Activated naive CD4-positive, alpha-beta T cell treated with anti-CD3 and anti-CD28 coated beads for 36 hours (primary cell): ENCODE measurements at regions of chr7 and their contacts with region 1.

Region 1: DNA sequence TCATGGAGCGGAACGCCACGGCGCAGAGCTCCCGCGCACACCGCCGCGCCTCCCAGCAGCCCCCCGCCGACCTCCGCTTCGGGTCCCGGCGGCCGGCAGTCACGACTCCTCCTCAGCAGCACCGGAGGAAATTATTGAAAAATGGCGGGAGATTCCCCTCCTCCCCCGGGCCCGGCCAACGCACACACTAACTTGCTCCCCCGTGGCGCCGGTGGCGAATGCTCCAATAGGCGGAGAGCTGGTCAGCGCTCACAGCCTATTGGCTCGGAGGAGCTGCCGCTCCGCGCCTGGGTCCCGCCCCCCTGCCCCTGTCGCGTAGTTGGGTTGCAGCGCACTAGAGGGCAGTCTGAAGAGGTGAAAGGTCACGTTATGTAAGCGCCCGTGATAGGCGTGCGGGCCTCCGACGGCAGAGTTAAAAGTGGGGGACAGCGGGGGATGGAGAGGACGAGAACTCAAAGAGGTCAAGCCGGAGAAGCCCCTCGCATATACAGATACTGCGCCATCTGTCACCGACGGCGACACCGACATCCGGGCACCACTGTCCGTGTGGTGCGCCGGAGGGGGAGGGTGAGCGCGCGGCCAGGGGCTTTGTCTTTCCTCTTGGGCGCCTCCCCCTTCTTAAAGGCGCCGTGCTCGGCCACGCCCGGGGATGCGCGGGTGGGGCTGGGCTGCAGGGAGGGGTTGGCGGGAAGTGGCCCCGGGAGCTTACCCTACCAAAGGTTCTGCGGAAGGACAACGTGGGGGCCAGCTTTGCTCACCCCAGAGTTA is at the start of gene BAZ1B:
- DNase-seq: peak; percentile 99
- H3K4me3 Mint-ChIP-seq: peak within 1 kb of the TSS; percentile 98
- H3K27ac Mint-ChIP-seq: peak within 1 kb of the TSS; percentile 96
- H3K4me1 Mint-ChIP-seq: peaks cover 55% of the 10 kb centered on the region
- H3K27me3 Mint-ChIP-seq: no peaks in the 10 kb centered on the region
- total RNA-seq, gene BAZ1B: 67.6 to 69.9 TPM

Region 2: GRCh38 chr7:73308665-73309214 is 213.5 kb before region 1 on chr7 and contains the start of gene NSUN5:
- CTCF ChIA-PET with region 1: no interaction called
- intact Hi-C with region 1: loop called (anchors 1 kb)
- DNase-seq: peak; percentile 95
- H3K4me3 Mint-ChIP-seq: peak within 1 kb of the TSS; percentile 99
- H3K27ac Mint-ChIP-seq: peak within 1 kb of the TSS; percentile 93
- H3K4me1 Mint-ChIP-seq: peaks cover 28% of the 10 kb centered on the region
- H3K27me3 Mint-ChIP-seq: no peaks in the 10 kb centered on the region
- total RNA-seq, gene NSUN5: 53.3 to 57.0 TPM

Region 3: DNA sequence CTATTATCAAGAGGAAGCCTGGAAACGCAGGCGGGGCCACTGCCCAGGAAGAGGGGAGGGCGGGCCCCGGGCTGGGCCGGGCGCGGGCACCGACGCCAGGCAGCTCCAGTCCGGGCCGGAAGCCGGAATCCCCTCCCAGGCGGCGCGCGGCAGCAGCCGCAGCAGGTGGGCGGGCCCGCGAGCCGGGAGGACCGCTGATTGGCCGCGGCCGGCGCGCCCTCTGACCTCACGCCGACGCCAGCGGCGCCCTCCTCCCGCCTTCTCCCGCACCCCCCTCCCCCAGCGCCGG is 34.8 kb after region 1 on chr7:
- CTCF ChIA-PET with region 1: interaction called, 3 read pairs
- intact Hi-C with region 1: loop called (anchors 1 kb)
- DNase-seq: peak; percentile 92
- H3K4me3 Mint-ChIP-seq: peak overlapping the region; percentile 86
- H3K27ac Mint-ChIP-seq: peak overlapping the region; percentile 89
- H3K4me1 Mint-ChIP-seq: peaks cover 41% of the 10 kb centered on the region
- H3K27me3 Mint-ChIP-seq: no peaks in the 10 kb centered on the region

Region 4: DNA sequence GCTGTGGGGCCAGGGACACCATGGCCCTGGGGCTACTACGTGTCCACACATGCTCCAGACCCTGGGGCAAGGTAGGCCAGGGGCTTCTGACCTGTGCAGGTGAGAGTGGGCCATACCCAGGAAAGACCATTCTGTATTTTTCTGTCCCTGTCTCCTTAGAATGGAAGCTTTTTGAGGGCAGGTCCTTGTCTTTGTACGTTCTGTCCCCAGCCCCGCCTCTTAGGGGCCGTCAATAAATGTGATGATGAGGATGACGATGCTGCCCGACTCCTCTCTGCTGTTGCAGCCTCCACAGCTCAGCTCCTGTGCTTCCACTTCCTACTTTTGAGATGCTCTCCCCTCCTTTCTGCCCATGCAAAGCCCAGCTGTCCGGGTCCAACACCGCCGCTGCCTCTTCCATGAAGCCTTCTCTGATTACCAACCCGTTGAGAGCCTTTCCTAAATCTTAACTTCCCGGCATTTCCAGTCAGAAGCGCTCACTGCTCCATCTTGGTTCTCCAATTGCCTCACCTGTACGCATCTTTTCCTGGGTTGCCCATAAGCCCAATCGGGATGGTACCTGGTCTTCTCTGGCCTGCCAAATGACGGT is 149.7 kb after region 1 on chr7:
- CTCF ChIA-PET with region 1: no interaction called
- intact Hi-C with region 1: no loop called
- DNase-seq: no peak
- H3K4me3 Mint-ChIP-seq: no peak overlapping the region
- H3K27ac Mint-ChIP-seq: no peak overlapping the region
- H3K4me1 Mint-ChIP-seq: peaks cover 6% of the 10 kb centered on the region
- H3K27me3 Mint-ChIP-seq: peaks cover 16% of the 10 kb centered on the region

Region 5: DNA sequence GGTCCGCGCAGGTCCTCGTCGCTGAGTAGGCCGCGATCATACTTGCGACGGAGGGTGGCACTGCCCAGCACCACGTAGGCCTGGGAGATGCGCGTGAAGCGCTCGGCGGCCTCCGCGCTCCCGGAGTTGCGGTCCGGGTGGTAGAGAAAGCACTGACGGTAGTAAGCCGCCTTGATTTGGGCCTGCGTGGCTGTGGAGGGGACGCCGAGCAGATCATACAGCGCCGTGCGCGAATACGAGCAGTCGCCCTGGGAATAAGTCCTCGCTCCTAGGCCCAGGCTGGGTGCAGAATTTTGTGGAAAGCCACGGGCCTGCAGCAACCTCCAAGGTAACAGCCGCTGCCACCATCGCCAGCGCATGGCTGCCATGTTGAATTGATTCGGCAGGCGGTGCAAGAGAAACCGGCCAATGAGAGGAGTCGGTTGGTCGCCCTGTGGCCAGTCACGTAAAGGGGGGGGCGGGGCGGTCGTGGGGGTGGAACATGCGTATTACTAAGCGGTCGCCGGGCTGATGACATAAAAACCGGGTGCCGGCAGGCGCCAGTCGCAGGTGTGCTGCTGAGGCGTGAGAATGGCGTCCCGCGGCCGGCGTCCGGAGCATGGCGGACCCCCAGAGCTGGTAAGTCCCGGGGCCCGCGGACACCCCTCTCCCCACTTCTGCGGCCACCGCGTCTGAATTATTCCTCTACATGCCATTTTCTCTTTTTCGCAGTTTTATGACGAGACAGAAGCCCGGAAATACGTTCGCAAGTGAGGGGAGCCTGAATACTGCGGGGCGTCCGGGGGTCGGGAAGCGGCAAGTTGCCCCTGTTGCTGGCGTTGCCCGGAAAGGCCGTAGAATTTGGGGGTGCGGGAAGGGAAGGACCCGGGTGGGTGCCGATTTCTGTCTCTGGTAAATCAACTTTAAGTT is 161.0 kb after region 1 on chr7 and contains the starts of genes BUD23 and DNAJC30:
- CTCF ChIA-PET with region 1: no interaction called
- intact Hi-C with region 1: loop called (anchors 1 kb)
- DNase-seq: peak; percentile 99
- H3K4me3 Mint-ChIP-seq: peak within 1 kb of the TSS; percentile 98
- H3K27ac Mint-ChIP-seq: peak within 1 kb of the TSS; percentile 91
- H3K4me1 Mint-ChIP-seq: peaks cover 47% of the 10 kb centered on the region
- H3K27me3 Mint-ChIP-seq: no peaks in the 10 kb centered on the region
- total RNA-seq, gene BUD23: 95.1 to 110 TPM
- total RNA-seq, gene DNAJC30: 4.2 to 4.4 TPM

Region 6: GRCh38 chr7:73851410-73852234 is 329.3 kb after region 1 on chr7:
- CTCF ChIA-PET with region 1: no interaction called
- intact Hi-C with region 1: loop called (anchors 1 kb)
- DNase-seq: peak; percentile 60
- H3K4me3 Mint-ChIP-seq: no peak overlapping the region
- H3K27ac Mint-ChIP-seq: peak overlapping the region; percentile 53
- H3K4me1 Mint-ChIP-seq: peaks cover 30% of the 10 kb centered on the region
- H3K27me3 Mint-ChIP-seq: peaks cover 14% of the 10 kb centered on the region